ENCODE measurements at regions of chr12 and their contacts with region 1.

Region 1: DNA sequence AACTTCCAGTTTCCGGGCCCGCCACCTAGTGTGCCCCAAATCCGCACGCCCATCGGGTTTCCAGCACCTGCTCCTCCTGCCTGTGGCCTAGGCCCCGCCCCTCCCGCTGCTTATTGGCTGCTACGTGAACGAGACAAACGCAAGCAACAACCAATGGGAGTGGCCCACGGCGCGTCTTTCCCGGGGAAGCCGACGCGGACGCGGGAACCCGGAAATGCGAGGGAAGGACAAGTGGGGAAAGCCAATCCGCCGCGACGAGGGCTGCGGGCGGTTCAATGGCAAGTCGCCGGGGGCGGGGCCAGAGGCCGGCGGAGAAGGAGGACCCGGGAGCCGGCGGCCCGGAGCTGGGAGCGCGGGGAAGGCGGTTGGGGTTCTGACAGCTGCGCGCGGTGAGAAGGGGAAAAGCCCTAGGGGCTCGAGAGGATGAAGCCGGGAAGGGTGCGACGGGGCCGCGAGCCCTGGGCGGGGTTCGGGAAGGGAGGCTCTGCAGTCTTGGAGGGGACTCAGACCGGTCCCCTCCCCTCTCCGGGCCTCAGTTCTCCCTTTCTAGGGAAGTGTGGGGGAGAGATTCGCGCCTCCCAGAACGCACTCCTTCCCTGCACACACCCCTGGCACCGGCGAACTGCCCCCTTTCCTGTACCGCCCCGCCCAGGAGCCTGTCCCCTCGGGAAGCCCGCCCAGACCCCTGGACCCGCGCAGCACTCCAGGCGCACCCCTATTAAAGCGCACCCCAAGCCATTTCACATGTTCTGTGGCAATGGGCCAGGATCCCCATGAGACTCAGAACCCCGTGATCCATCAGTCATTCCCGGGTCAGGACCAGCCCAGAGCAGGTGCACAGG is at the start of gene FICD:
- DNase-seq: peak; percentile 100
- H3K4me3 Mint-ChIP-seq: peak within 1 kb of the TSS; percentile 88
- H3K27ac Mint-ChIP-seq: peak within 1 kb of the TSS; percentile 84
- H3K4me1 Mint-ChIP-seq: peaks cover 34% of the 10 kb centered on the region
- H3K27me3 Mint-ChIP-seq: no peaks in the 10 kb centered on the region
- total RNA-seq, gene FICD: 5.7 to 6.0 TPM

Region 2: DNA sequence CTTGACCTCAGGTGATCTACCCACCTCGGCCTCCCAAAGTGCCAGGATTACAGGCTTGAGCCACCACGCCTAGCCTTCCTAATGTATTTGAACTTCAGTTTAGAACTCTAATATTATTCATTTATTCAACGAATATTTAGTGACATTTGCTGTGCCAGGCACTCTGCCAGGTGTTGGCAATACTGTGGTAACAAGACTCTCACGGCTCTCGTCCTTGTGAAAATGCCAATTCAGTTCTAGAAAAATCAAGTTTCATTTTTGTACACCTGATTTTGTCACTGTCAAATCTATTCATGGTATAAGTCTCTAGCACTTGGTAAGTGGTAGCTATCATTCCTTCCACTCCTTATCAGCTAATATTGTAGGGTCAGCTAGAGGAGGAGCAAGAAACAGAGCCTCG is 835.9 kb before region 1 on chr12:
- CTCF ChIA-PET with region 1: interaction called, 6 read pairs
- POLR2A ChIA-PET with region 1: no interaction called
- intact Hi-C with region 1: loop called (anchors 5 kb)
- DNase-seq: no peak
- H3K4me3 Mint-ChIP-seq: no peak overlapping the region
- H3K27ac Mint-ChIP-seq: no peak overlapping the region
- H3K4me1 Mint-ChIP-seq: peaks cover 2% of the 10 kb centered on the region
- H3K27me3 Mint-ChIP-seq: peaks cover 4% of the 10 kb centered on the region

Region 3: GRCh38 chr12:107760809-107761501 is 754.2 kb before region 1 on chr12 and contains the start of gene PRDM4:
- CTCF ChIA-PET with region 1: interaction called, 3 read pairs
- POLR2A ChIA-PET with region 1: no interaction called
- intact Hi-C with region 1: loop called (anchors 5 kb)
- DNase-seq: peak; percentile 94
- H3K4me3 Mint-ChIP-seq: peak within 1 kb of the TSS; percentile 92
- H3K27ac Mint-ChIP-seq: peak within 1 kb of the TSS; percentile 88
- H3K4me1 Mint-ChIP-seq: peaks cover 27% of the 10 kb centered on the region
- H3K27me3 Mint-ChIP-seq: no peaks in the 10 kb centered on the region
- total RNA-seq, gene PRDM4: 33.4 to 39.0 TPM

Region 4: GRCh38 chr12:107992870-107993451 is 522.2 kb before region 1 on chr12:
- CTCF ChIA-PET with region 1: interaction called, 23 read pairs
- POLR2A ChIA-PET with region 1: no interaction called
- intact Hi-C with region 1: no loop called
- DNase-seq: peak; percentile 8
- H3K4me3 Mint-ChIP-seq: no peak overlapping the region
- H3K27ac Mint-ChIP-seq: no peak overlapping the region
- H3K4me1 Mint-ChIP-seq: no peaks in the 10 kb centered on the region
- H3K27me3 Mint-ChIP-seq: peaks cover 11% of the 10 kb centered on the region

Region 5: GRCh38 chr12:108008163-108008905 is 506.9 kb before region 1 on chr12:
- CTCF ChIA-PET with region 1: no interaction called
- POLR2A ChIA-PET with region 1: no interaction called
- intact Hi-C with region 1: no loop called
- DNase-seq: no peak
- H3K4me3 Mint-ChIP-seq: no peak overlapping the region
- H3K27ac Mint-ChIP-seq: no peak overlapping the region
- H3K4me1 Mint-ChIP-seq: no peaks in the 10 kb centered on the region
- H3K27me3 Mint-ChIP-seq: peaks cover 3% of the 10 kb centered on the region

Region 6: GRCh38 chr12:108324351-108325017 is 190.7 kb before region 1 on chr12:
- CTCF ChIA-PET with region 1: no interaction called
- POLR2A ChIA-PET with region 1: no interaction called
- intact Hi-C with region 1: no loop called
- DNase-seq: no peak
- H3K4me3 Mint-ChIP-seq: no peak overlapping the region
- H3K27ac Mint-ChIP-seq: no peak overlapping the region
- H3K4me1 Mint-ChIP-seq: no peaks in the 10 kb centered on the region
- H3K27me3 Mint-ChIP-seq: peaks cover 11% of the 10 kb centered on the region

Region 7: DNA sequence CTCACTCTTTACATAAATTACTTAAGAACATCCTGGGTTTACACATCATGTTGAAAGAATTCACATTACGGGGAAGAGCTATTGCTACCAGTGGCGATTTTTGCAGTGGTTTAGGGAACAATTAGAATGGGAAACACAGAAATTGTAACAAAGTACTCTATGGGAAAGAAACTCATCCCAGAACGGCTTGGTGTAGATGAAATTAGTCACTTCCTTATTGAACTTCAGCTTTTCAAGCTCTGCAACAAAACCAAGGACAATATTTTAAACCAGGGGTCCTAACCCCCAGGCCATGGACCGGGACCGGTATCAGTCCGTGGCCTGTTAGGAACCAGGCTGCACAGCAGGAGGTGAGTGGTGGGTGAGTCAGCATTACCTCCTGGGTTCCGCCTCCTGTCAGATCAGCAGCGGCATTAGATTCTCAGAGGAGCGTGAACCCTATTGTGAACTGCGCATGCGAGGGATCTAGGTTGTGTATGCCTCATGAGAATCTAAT is 32.4 kb before region 1 on chr12:
- CTCF ChIA-PET with region 1: no interaction called
- POLR2A ChIA-PET with region 1: no interaction called
- intact Hi-C with region 1: no loop called
- DNase-seq: no peak
- H3K4me3 Mint-ChIP-seq: no peak overlapping the region
- H3K27ac Mint-ChIP-seq: no peak overlapping the region
- H3K4me1 Mint-ChIP-seq: no peaks in the 10 kb centered on the region
- H3K27me3 Mint-ChIP-seq: peaks cover 29% of the 10 kb centered on the region

Region 8: GRCh38 chr12:108562348-108563135 is 47.3 kb after region 1 on chr12 and contains the start of gene ISCU:
- CTCF ChIA-PET with region 1: no interaction called
- POLR2A ChIA-PET with region 1: interaction called, 3 read pairs
- intact Hi-C with region 1: loop called (anchors 1 kb)
- DNase-seq: peak; percentile 99
- H3K4me3 Mint-ChIP-seq: peak within 1 kb of the TSS; percentile 100
- H3K27ac Mint-ChIP-seq: peak within 1 kb of the TSS; percentile 99
- H3K4me1 Mint-ChIP-seq: peaks cover 57% of the 10 kb centered on the region
- H3K27me3 Mint-ChIP-seq: no peaks in the 10 kb centered on the region
- total RNA-seq, gene ISCU: 88.6 to 94.3 TPM

Region 9: GRCh38 chr12:108731105-108731865 is 216.1 kb after region 1 on chr12 and contains the start of gene CORO1C:
- CTCF ChIA-PET with region 1: no interaction called
- POLR2A ChIA-PET with region 1: no interaction called
- intact Hi-C with region 1: loop called (anchors 5 kb)
- DNase-seq: peak; percentile 97
- H3K4me3 Mint-ChIP-seq: peak within 1 kb of the TSS; percentile 91
- H3K27ac Mint-ChIP-seq: peak within 1 kb of the TSS; percentile 91
- H3K4me1 Mint-ChIP-seq: peaks cover 34% of the 10 kb centered on the region
- H3K27me3 Mint-ChIP-seq: no peaks in the 10 kb centered on the region
- total RNA-seq, gene CORO1C: 62.1 to 70.9 TPM

Measured in activated CD4-positive, alpha-beta memory T cell treated with anti-CD3 and anti-CD28 coated beads for 36 hours (primary cell).